ENCODE measurements at regions of chr6 and their contacts with region 1.

Region 1: DNA sequence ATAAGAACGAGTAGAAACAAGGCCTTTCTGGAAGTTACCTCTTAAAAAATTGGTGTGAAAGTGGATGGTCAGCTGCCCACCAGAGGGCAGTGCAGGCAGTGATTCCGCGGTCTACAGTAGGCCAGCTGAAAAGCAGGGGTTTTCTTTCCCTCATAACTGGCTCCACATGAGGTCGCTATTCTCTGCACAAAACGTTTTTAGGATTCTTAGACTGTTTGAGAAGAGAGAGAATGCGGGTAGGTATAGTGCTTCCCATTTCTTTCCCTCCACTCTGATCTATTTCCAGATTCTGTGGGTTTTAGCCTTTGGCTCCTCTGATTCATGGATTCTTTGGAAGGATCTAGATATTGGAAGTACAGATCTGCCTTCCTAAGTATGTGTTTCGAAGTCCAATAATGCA is 14.2 kb downstream of the FIG4 start:
- DNase-seq: peak; percentile 50 to 90 (median 72)
- ATAC-seq: peak; percentile 98
- H3K4me3 ChIP-seq: no peak overlapping the region
- H3K4me3 Mint-ChIP-seq: no peak overlapping the region
- H3K27ac ChIP-seq: no peak overlapping the region
- H3K27ac Mint-ChIP-seq: no peak overlapping the region
- H3K4me1 ChIP-seq: peaks cover 10% of the 10 kb centered on the region
- H3K4me1 Mint-ChIP-seq: peaks cover 27% of the 10 kb centered on the region
- H3K27me3 ChIP-seq: no peaks in the 10 kb centered on the region
- H3K27me3 Mint-ChIP-seq: no peaks in the 10 kb centered on the region
- CTCF ChIP-seq: peak; percentile 82

Region 2: GRCh38 chr6:109526905-109527628 is 178.2 kb before region 1 on chr6:
- CTCF ChIA-PET with region 1: interaction called, 3 read pairs
- POLR2A ChIA-PET with region 1: no interaction called
- intact Hi-C with region 1: loop called (anchors 2 to 5 kb)
- DNase-seq: peak in 8 of 9 experiments; percentile 31 to 74 (median 55)
- ATAC-seq: peak; percentile 68
- H3K4me3 ChIP-seq: no peak overlapping the region
- H3K4me3 Mint-ChIP-seq: no peak overlapping the region
- H3K27ac ChIP-seq: no peak overlapping the region
- H3K27ac Mint-ChIP-seq: no peak overlapping the region
- H3K4me1 ChIP-seq: no peaks in the 10 kb centered on the region
- H3K4me1 Mint-ChIP-seq: peaks cover 3% of the 10 kb centered on the region
- H3K27me3 ChIP-seq: no peaks in the 10 kb centered on the region
- H3K27me3 Mint-ChIP-seq: no peaks in the 10 kb centered on the region
- CTCF ChIP-seq: peak; percentile 58

Region 3: GRCh38 chr6:109793793-109794192 is 88.5 kb after region 1 on chr6:
- CTCF ChIA-PET with region 1: no interaction called
- POLR2A ChIA-PET with region 1: no interaction called
- intact Hi-C with region 1: no loop called
- DNase-seq: no peak
- ATAC-seq: no peak
- H3K4me3 ChIP-seq: no peak overlapping the region
- H3K4me3 Mint-ChIP-seq: no peak overlapping the region
- H3K27ac ChIP-seq: no peak overlapping the region
- H3K27ac Mint-ChIP-seq: no peak overlapping the region
- H3K4me1 ChIP-seq: no peaks in the 10 kb centered on the region
- H3K4me1 Mint-ChIP-seq: no peaks in the 10 kb centered on the region
- H3K27me3 ChIP-seq: no peaks in the 10 kb centered on the region
- H3K27me3 Mint-ChIP-seq: no peaks in the 10 kb centered on the region
- CTCF ChIP-seq: no peak

Region 4: GRCh38 chr6:110053395-110054240 is 348.4 kb after region 1 on chr6:
- CTCF ChIA-PET with region 1: interaction called, 7 read pairs
- POLR2A ChIA-PET with region 1: no interaction called
- intact Hi-C with region 1: loop called in 1 of 2 experiments (anchors 1 kb)
- DNase-seq: peak in 2 of 9 experiments; percentile 43 to 56
- ATAC-seq: no peak
- H3K4me3 ChIP-seq: no peak overlapping the region
- H3K4me3 Mint-ChIP-seq: no peak overlapping the region
- H3K27ac ChIP-seq: no peak overlapping the region
- H3K27ac Mint-ChIP-seq: no peak overlapping the region
- H3K4me1 ChIP-seq: no peaks in the 10 kb centered on the region
- H3K4me1 Mint-ChIP-seq: no peaks in the 10 kb centered on the region
- H3K27me3 ChIP-seq: no peaks in the 10 kb centered on the region
- H3K27me3 Mint-ChIP-seq: peaks cover 2% of the 10 kb centered on the region
- CTCF ChIP-seq: peak; percentile 41

Measured in CD8-positive, alpha-beta T cell (primary cell).